ENCODE measurements at regions of chr2 and their contacts with region 1.

Region 1: GRCh38 chr2:220717283-220717682 is 854.8 kb downstream of the EPHA4 start:
- DNase-seq: no peak
- ATAC-seq: no peak
- H3K4me3 Mint-ChIP-seq: no peak overlapping the region
- H3K27ac Mint-ChIP-seq: no peak overlapping the region
- H3K4me1 Mint-ChIP-seq: no peaks in the 10 kb centered on the region
- H3K27me3 Mint-ChIP-seq: peaks cover 10% of the 10 kb centered on the region

Region 2: GRCh38 chr2:220744861-220745260 is 27.6 kb after region 1 on chr2:
- CTCF ChIA-PET with region 1: no interaction called
- POLR2A ChIA-PET with region 1: no interaction called
- intact Hi-C with region 1: loop called in 1 of 2 experiments (anchors 1 kb)
- DNase-seq: no peak
- ATAC-seq: no peak
- H3K4me3 Mint-ChIP-seq: no peak overlapping the region
- H3K27ac Mint-ChIP-seq: no peak overlapping the region
- H3K4me1 Mint-ChIP-seq: no peaks in the 10 kb centered on the region
- H3K27me3 Mint-ChIP-seq: peaks cover 5% of the 10 kb centered on the region

Measured in activated CD4-positive, alpha-beta T cell treated with anti-CD3 and anti-CD28 coated beads for 36 hours (primary cell).